ENCODE measurements at regions of chr1 and their contacts with region 1.

Region 1: GRCh38 chr1:18902523-18903290 is at the start of gene ALDH4A1:
- DNase-seq: peak; percentile 97
- ATAC-seq: peak; percentile 99
- H3K4me3 Mint-ChIP-seq: peak within 1 kb of the TSS; percentile 91
- H3K27ac Mint-ChIP-seq: peak within 1 kb of the TSS; percentile 98
- H3K4me1 Mint-ChIP-seq: peaks cover 36% of the 10 kb centered on the region
- H3K27me3 Mint-ChIP-seq: peaks cover 2% of the 10 kb centered on the region
- total RNA-seq, gene ALDH4A1: 4.2 to 4.3 TPM

Region 2: DNA sequence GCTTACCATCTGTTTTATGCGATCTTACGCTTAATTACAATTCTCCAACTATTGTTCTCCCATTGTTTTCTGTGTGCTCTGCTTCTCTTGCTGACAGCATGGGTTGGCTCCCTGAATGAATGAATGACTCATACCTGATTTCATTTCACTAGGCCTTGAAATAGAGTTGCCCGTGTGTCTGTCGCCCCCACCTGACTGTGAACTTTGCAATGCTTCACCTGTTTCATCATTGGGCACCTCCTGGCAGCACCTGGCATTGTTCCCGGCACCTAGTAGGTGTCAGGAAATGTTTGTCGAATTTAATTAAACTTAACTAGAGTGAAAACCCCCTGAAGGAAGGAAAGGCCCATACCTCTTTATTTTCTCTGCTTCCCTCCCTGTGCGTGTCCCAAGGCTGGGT is 542.5 kb before region 1 on chr1:
- CTCF ChIA-PET with region 1: no interaction called
- POLR2A ChIA-PET with region 1: no interaction called
- DNase-seq: no peak
- ATAC-seq: no peak
- H3K4me3 Mint-ChIP-seq: no peak overlapping the region
- H3K27ac Mint-ChIP-seq: no peak overlapping the region
- H3K4me1 Mint-ChIP-seq: no peaks in the 10 kb centered on the region
- H3K27me3 Mint-ChIP-seq: no peaks in the 10 kb centered on the region

Region 3: DNA sequence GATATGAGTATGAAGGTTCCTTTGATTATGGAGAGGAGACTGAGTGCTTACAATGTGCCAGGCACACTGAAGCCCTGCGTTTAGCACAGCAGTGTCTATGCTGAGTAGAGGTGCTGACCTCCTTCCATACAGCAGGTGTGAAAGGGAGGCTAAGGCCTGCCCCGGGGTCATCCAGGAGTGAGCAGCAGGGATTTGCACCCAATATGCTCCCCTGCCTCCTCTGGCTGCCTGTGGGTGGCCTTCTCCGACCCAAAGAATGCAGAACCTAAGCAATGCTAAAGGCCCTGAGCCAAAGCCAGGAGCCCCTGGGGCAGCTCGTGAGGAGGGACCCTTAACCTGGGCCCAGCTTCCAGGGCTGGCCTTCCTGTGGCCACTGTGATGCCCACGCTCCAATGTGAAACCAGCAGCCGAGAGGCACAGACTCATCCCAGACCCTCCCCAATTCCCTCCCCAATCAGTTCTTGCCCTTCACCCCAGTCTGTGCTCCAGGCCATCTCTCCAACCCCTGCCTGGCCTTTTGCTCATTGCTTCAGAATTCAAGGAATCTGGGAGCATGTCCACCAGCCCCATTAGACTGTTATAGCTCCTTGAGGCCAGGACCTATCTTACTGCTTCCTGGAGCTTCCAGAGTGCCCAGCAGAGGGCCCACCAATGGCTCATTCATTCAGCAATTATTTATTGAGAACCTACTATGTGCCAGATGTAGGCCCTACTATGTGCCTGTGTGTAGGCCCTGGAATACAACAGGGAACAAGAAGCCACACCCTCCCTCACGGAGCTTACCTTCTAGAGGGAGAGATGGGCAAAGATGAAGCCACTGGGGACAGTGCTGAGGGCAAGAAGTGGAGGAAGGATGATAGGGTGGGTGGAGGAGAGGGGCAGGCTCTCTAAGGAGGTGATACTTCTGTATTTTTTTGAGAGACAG is 96.5 kb before region 1 on chr1:
- CTCF ChIA-PET with region 1: no interaction called
- POLR2A ChIA-PET with region 1: no interaction called
- DNase-seq: no peak
- ATAC-seq: no peak
- H3K4me3 Mint-ChIP-seq: no peak overlapping the region
- H3K27ac Mint-ChIP-seq: no peak overlapping the region
- H3K4me1 Mint-ChIP-seq: no peaks in the 10 kb centered on the region
- H3K27me3 Mint-ChIP-seq: peaks cover 3% of the 10 kb centered on the region

Region 4: GRCh38 chr1:18836654-18837053 is 66.1 kb before region 1 on chr1:
- CTCF ChIA-PET with region 1: no interaction called
- POLR2A ChIA-PET with region 1: no interaction called
- DNase-seq: no peak
- ATAC-seq: no peak
- H3K4me3 Mint-ChIP-seq: no peak overlapping the region
- H3K27ac Mint-ChIP-seq: no peak overlapping the region
- H3K4me1 Mint-ChIP-seq: no peaks in the 10 kb centered on the region
- H3K27me3 Mint-ChIP-seq: no peaks in the 10 kb centered on the region

Region 5: DNA sequence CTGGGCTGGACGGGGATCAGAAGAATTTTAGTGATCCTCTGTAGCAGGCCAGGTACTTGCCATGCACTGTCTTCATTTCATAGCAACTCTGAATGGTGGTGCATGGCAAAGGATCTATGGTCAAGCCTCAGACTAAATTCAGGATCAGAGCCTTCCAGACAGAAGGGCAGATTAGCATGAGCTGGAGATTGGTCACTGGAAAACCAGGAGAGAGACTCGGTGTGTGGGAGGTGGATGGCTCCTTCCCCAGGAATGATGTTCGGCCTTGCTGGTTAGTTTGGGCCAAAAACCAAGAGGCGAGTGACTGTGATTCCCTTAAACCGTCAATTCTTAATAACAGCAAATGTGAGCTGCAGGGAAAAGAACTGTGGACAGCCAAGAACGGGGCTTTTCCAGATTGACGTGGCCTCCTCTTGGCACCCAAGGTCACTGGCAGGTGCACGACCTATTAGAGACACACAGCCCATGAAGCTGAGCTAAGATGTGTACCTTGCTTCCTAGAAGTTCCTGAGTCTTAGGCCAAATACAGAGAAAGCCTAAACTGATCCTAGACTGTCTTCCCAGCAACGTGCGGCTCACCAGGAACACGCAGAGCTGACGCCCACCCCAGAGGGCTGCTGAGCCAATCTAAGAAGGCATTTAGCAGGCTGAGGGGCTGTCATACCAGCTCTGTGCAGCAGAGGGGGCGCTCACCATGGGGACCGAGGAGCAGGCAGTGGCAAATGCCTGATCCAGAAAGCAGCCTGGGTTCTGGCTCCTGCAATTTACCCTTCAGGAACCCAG is 18.9 kb before region 1 on chr1:
- CTCF ChIA-PET with region 1: interaction called, 28 read pairs
- POLR2A ChIA-PET with region 1: interaction called, 3 read pairs
- DNase-seq: peak; percentile 76
- ATAC-seq: peak; percentile 69
- H3K4me3 Mint-ChIP-seq: no peak overlapping the region
- H3K27ac Mint-ChIP-seq: no peak overlapping the region
- H3K4me1 Mint-ChIP-seq: no peaks in the 10 kb centered on the region
- H3K27me3 Mint-ChIP-seq: no peaks in the 10 kb centered on the region

Region 6: GRCh38 chr1:18926315-18927081 is 23.8 kb after region 1 on chr1:
- CTCF ChIA-PET with region 1: interaction called, 27 read pairs
- POLR2A ChIA-PET with region 1: interaction called, 12 read pairs
- DNase-seq: peak; percentile 94
- ATAC-seq: peak; percentile 87
- H3K4me3 Mint-ChIP-seq: peak overlapping the region; percentile 83
- H3K27ac Mint-ChIP-seq: peak overlapping the region; percentile 98
- H3K4me1 Mint-ChIP-seq: peaks cover 67% of the 10 kb centered on the region
- H3K27me3 Mint-ChIP-seq: no peaks in the 10 kb centered on the region

Region 7: DNA sequence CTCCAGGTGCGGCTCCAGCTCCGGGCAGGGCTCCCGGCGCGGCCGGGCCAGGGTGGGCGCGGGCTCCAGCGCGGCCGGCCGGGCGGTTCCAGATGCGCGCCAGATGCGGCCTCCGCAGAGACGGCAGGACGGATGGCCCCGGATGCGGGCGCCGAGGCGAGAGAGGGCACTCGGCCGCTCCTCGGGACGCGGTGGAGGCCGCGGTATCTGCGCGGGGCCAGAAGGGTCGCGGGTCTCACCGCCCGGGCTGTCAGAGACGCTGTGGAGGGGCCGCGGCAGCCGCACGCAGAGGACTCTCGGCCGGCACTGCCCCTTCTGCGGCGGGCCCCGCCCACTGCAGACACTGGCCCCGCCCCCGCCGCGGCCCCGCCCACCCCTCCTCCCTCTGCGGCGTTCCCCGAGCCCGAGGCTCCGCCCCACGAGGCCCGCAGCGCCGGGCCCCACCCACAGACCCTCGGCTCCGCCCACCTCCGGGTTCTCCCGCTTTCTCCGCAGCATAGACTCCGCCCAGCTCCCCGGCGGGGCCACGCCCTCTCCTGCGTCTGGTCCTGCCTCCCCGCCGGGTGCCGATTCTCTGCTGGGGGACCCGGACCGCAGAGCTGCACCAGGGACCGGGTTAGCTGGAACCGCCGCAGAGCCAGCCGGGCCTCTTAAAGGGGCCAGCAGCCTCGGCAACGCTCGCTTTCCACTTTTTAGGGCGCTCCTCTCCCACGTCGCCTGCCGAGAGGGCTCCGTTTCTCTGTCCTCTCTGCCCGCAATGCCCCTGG is 53.8 kb after region 1 on chr1 and contains the start of gene IFFO2:
- CTCF ChIA-PET with region 1: interaction called, 54 read pairs
- POLR2A ChIA-PET with region 1: no interaction called
- DNase-seq: peak; percentile 97
- ATAC-seq: peak; percentile 74
- H3K4me3 Mint-ChIP-seq: peak within 1 kb of the TSS; percentile 77
- H3K27ac Mint-ChIP-seq: peak within 1 kb of the TSS; percentile 72
- H3K4me1 Mint-ChIP-seq: peaks cover 59% of the 10 kb centered on the region
- H3K27me3 Mint-ChIP-seq: peaks cover 45% of the 10 kb centered on the region
- total RNA-seq, gene IFFO2: 7.2 to 8.2 TPM

Region 8: GRCh38 chr1:18972531-18972930 is 69.8 kb after region 1 on chr1:
- CTCF ChIA-PET with region 1: interaction called, 24 read pairs
- POLR2A ChIA-PET with region 1: no interaction called
- DNase-seq: no peak
- ATAC-seq: no peak
- H3K4me3 Mint-ChIP-seq: no peak overlapping the region
- H3K27ac Mint-ChIP-seq: no peak overlapping the region
- H3K4me1 Mint-ChIP-seq: no peaks in the 10 kb centered on the region
- H3K27me3 Mint-ChIP-seq: peaks cover 11% of the 10 kb centered on the region

Region 9: DNA sequence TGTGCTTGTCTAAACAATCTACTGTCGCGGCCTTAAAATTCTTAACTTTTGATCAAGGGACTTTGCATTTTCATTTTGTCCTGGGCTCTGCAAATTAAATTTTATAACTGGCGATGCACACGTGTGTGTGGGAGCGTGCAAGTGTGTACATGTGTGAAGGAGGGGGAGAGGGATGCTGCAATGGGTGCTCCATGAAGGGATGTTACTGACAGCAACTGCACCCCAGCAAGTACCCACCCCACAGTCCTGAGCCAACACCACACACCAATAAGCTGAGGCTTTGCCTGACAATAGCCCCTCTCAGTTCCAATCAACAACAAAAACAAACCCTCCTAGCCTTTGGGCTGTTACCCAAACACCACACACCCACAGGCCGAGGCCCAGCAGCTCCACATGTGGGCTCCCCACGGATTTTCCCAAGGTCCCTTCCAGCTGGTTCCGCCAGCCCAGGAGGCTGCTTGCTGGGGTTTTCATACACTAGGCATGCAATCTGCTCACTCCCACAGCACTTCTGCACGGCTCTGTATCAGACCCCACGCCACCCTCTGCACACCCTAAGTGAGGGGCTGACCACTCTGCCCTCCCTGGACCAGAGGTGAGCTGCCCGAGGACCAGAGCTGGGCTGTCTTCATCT is 86.6 kb after region 1 on chr1:
- CTCF ChIA-PET with region 1: no interaction called
- POLR2A ChIA-PET with region 1: no interaction called
- DNase-seq: no peak
- ATAC-seq: no peak
- H3K4me3 Mint-ChIP-seq: no peak overlapping the region
- H3K27ac Mint-ChIP-seq: no peak overlapping the region
- H3K4me1 Mint-ChIP-seq: no peaks in the 10 kb centered on the region
- H3K27me3 Mint-ChIP-seq: peaks cover 30% of the 10 kb centered on the region

Region 10: DNA sequence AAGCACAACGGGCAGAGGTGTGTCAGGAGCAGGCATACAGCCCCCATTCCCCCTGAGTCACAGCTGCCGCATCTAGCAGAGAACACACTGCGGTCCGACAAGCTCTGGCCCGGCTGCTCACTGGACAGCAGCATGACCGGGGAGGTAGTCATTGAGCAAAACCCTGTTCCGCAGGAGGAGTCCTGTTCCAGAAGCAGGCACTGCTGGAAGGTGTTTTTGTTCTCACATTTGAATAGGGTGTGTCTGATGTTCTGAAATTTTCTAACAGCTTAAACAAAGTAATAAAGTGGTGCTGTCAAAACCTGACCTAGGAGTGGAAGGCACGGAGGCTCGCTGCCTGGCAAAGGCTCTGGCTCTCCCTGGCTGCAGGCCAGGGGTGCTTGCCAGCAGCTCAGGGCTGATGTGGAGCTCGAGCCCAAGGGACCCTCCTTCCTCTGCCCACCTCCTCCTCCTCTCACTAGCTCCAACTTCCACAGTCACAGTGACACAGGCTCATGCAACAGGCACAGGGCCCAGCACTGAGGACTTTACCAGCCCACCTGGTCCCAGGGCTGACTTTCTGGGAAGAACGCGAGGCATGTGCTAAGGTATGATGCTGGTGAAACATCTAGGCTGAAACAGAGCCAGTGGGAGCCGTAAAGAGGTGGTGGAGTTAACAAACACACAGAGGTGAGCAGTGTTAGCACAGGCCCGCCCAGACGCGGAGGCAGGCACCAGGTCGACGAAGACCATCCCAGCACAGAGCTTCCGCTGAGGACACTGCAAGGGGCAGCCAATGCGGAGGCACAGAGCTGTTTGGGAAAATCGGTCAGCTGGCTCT is 172.4 kb after region 1 on chr1:
- CTCF ChIA-PET with region 1: interaction called, 29 read pairs
- POLR2A ChIA-PET with region 1: no interaction called
- DNase-seq: no peak
- ATAC-seq: no peak
- H3K4me3 Mint-ChIP-seq: no peak overlapping the region
- H3K27ac Mint-ChIP-seq: peak overlapping the region; percentile 78
- H3K4me1 Mint-ChIP-seq: peaks cover 34% of the 10 kb centered on the region
- H3K27me3 Mint-ChIP-seq: peaks cover 6% of the 10 kb centered on the region

Region 11: GRCh38 chr1:19113697-19114092 is 211.0 kb after region 1 on chr1:
- CTCF ChIA-PET with region 1: interaction called, 28 read pairs
- POLR2A ChIA-PET with region 1: no interaction called
- DNase-seq: peak; percentile 68
- ATAC-seq: peak; percentile 69
- H3K4me3 Mint-ChIP-seq: no peak overlapping the region
- H3K27ac Mint-ChIP-seq: no peak overlapping the region
- H3K4me1 Mint-ChIP-seq: no peaks in the 10 kb centered on the region
- H3K27me3 Mint-ChIP-seq: no peaks in the 10 kb centered on the region